Motor neuron (in vitro differentiated cells): ENCODE measurements at regions of chr17 and their contacts with region 1.

Region 1: GRCh38 chr17:50026901-50027630 is 28.8 kb upstream of the ITGA3 start:
- ATAC-seq: peak; percentile 67 to 92 (median 71)
- H3K4me3 ChIP-seq: no peak overlapping the region
- H3K27ac ChIP-seq: no peak overlapping the region
- H3K4me1 ChIP-seq: peaks cover 3 to 8% of the 10 kb centered on the region in 2 donors

Region 2: GRCh38 chr17:49798182-49798581 is 228.9 kb before region 1 on chr17:
- in situ Hi-C with region 1: no loop called
- ATAC-seq: peak in 2 of 8 experiments; percentile 61 to 62
- H3K4me3 ChIP-seq: no peak overlapping the region
- H3K27ac ChIP-seq: no peak overlapping the region
- H3K4me1 ChIP-seq: no peaks in the 10 kb centered on the region

Region 3: DNA sequence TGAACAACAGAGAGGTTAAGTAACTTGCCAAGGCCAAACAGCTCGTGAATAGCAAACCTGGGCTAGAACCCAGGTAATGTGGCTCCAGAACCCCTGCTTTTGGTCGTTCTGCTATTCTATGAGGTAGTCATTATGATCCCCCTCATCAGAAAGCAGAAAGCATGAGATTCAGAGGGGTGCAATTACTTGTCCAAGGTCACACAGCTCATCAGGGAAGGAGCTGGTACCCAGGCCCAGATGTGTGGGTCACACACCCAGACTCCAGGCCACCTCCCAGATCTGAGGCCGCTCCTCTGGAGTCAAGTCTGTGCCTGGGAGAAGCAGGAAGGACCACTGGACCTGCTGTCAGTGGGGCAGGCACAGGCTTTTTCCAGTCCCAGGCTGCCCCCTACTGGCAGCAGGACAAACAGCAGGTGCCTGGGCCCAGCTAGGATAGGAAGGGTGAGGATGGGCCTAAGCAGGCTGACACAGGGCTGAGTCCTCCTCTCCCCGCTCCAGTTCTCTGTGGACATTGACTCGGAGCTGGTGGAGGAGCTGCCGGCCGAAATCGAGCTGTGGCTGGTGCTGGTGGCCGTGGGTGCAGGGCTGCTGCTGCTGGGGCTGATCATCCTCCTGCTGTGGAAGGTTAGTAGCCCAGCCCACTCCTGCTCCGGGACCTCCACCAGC is 60.3 kb after region 1 on chr17:
- in situ Hi-C with region 1: loop called in 3 of 9 experiments (anchors 5 to 10 kb)
- ATAC-seq: peak; percentile 65 to 100 (median 76)
- H3K4me3 ChIP-seq: no peak overlapping the region
- H3K27ac ChIP-seq: no peak overlapping the region
- H3K4me1 ChIP-seq: no peaks in the 10 kb centered on the region

Region 4: DNA sequence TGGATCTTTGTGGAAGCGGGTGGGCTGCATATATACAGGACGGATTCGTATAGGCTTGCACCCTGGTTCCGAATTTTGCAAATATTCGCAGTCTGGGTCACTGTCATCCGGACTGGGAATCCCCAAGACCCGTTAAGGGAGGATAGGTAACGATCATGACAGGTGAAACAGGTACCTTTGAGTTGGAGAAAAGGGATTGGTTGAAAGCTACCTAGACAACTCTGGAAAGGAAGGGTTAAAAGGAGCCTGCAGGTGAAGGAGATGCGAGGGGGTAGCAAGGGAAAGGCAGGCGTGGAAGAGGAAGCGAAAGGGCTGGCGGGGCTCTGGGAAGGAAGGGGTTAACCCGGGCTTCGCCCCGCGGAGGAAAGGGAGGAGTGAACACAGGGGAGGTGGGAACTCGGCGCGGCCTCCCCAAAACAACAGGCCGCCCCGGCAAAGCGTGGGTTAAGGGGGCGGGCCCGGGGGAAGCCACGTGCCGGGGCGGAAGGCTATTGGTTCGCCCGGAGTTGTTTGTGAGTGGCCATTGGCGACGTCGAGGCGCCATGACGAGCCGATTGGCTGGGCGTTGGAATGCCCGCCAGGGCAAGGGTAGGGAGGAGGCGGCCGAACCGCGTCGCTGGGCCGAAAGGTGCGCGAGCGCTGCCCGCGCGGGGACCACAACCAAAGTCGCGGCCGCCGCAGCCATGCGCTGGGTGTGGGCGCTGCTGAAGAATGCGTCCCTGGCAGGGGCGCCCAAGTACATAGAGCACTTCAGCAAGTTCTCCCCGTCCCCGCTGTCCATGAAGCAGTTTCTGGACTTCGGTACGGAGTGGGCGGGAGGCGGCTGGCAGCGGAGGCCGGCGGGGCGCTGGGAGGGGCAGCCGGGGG is 67.9 kb after region 1 on chr17 and contains the start of gene PDK2:
- in situ Hi-C with region 1: loop called in 1 of 9 experiments (anchors 5 kb)
- ATAC-seq: peak; percentile 93 to 98 (median 96)
- H3K4me3 ChIP-seq: peak within 1 kb of the TSS; percentile 60 to 94 (median 82)
- H3K27ac ChIP-seq: no peak within 1 kb of the TSS
- H3K4me1 ChIP-seq: peaks cover 12 to 21% of the 10 kb centered on the region in 2 donors
- total RNA-seq, gene PDK2: 7.1 to 53.4 (median 10.7) TPM